ENCODE measurements at regions of chr6 and their contacts with region 1.

Region 1: GRCh38 chr6:8983188-8983688 is 547.9 kb upstream of the SLC35B3 start:
- DNase-seq: peak; percentile 74
- H3K4me3 Mint-ChIP-seq: no peak overlapping the region
- H3K27ac Mint-ChIP-seq: no peak overlapping the region
- H3K4me1 Mint-ChIP-seq: no peaks in the 10 kb centered on the region
- H3K27me3 Mint-ChIP-seq: no peaks in the 10 kb centered on the region
- CTCF ChIP-seq: peak; percentile 95

Region 2: DNA sequence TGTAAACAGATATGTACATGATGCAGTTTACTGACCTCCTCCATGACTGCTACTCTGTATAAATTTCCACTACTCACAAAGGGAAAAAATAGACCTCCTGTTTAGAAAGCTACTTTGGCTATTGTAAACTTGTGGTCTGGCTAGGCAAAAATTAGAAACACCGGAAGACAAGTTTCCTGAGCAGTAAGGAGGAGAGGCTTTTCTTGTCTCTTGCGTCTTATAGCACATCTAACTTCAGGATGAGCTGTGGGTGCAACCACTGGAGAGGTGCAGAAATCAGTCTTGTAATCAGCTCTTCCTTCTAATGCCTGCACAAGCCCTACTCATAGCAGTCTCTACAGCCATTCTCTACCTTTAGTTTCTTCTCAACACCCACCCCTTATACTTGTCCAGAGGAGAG is 251.4 kb before region 1 on chr6:
- CTCF ChIA-PET with region 1: no interaction called
- POLR2A ChIA-PET with region 1: no interaction called
- intact Hi-C with region 1: no loop called
- DNase-seq: no peak
- H3K4me3 Mint-ChIP-seq: no peak overlapping the region
- H3K27ac Mint-ChIP-seq: no peak overlapping the region
- H3K4me1 Mint-ChIP-seq: no peaks in the 10 kb centered on the region
- H3K27me3 Mint-ChIP-seq: no peaks in the 10 kb centered on the region
- CTCF ChIP-seq: no peak

Region 3: DNA sequence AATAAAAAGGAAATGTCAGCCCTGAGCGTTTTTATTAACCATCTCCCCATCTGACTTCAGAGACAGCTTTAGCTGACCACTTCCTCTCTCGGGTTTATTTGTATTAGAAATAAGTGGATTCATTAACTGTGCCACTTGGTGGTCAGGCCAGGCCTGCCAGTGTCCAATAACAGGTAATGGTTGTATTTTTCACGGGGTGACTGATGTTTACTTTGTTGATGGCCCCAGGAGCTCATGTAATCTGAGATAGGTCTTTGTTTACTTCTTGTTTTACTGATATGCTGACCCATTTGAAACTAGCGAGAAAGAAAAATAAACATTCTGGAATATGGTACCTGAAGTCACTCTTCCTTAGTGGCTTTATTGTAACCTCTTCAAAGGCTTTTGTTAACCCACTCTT is 43.6 kb before region 1 on chr6:
- CTCF ChIA-PET with region 1: no interaction called
- POLR2A ChIA-PET with region 1: no interaction called
- intact Hi-C with region 1: no loop called
- DNase-seq: no peak
- H3K4me3 Mint-ChIP-seq: no peak overlapping the region
- H3K27ac Mint-ChIP-seq: no peak overlapping the region
- H3K4me1 Mint-ChIP-seq: no peaks in the 10 kb centered on the region
- H3K27me3 Mint-ChIP-seq: no peaks in the 10 kb centered on the region
- CTCF ChIP-seq: no peak

Region 4: GRCh38 chr6:9250852-9251251 is 267.6 kb after region 1 on chr6:
- CTCF ChIA-PET with region 1: interaction called, 5 read pairs
- POLR2A ChIA-PET with region 1: interaction called, 3 read pairs
- intact Hi-C with region 1: loop called (anchors 2 kb)
- DNase-seq: peak; percentile 78
- H3K4me3 Mint-ChIP-seq: no peak overlapping the region
- H3K27ac Mint-ChIP-seq: no peak overlapping the region
- H3K4me1 Mint-ChIP-seq: no peaks in the 10 kb centered on the region
- H3K27me3 Mint-ChIP-seq: no peaks in the 10 kb centered on the region
- CTCF ChIP-seq: peak; percentile 69

Region 5: GRCh38 chr6:9540534-9541126 is 557.4 kb after region 1 on chr6:
- CTCF ChIA-PET with region 1: no interaction called
- POLR2A ChIA-PET with region 1: no interaction called
- intact Hi-C with region 1: loop called (anchors 1 kb)
- DNase-seq: peak; percentile 76
- H3K4me3 Mint-ChIP-seq: no peak overlapping the region
- H3K27ac Mint-ChIP-seq: no peak overlapping the region
- H3K4me1 Mint-ChIP-seq: no peaks in the 10 kb centered on the region
- H3K27me3 Mint-ChIP-seq: no peaks in the 10 kb centered on the region
- CTCF ChIP-seq: peak; percentile 59

Region 6: DNA sequence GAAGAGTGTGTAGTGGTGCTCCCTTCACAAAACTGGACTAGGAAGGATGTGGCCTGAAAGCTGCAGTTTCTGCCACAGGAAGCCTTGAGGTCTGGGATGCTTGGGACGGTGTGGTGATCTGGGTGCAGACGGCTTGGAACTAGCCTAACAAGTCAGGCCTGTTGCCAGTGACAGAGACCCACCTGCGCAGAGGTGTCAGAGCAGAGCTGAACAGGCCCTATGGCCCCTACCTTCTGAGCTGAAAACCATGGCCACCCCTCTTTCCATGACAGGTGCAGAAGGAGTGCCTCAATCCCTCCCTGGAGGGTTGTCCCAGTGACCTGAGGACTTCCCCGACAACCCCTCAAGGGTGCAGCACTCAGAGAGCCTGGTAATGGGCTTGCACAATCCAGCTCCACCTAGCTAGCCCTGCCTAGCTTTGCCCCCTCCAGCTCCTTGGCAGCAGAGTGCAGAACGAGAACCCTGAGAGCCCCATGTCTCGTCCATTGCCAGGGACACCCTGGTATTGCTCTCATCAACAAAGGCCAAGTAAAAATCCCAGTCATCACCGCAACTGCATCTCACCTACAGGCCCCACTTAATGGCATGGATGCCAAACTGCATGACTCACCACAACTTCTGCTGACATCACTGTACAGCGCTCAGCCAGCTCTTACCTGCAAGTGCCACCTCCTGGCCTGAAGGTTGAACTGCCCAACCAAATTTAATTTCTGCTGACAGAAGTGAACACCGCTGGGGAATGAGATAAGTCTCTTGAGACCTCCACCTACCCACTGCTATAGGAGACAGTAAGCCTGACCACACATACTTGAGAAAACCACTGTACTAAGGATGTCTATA is 868.5 kb after region 1 on chr6:
- CTCF ChIA-PET with region 1: no interaction called
- POLR2A ChIA-PET with region 1: no interaction called
- intact Hi-C with region 1: loop called (anchors 1 kb)
- DNase-seq: peak; percentile 85
- H3K4me3 Mint-ChIP-seq: no peak overlapping the region
- H3K27ac Mint-ChIP-seq: no peak overlapping the region
- H3K4me1 Mint-ChIP-seq: no peaks in the 10 kb centered on the region
- H3K27me3 Mint-ChIP-seq: no peaks in the 10 kb centered on the region
- CTCF ChIP-seq: peak; percentile 41